Right cardiac atrium (tissue), 5 donors: ENCODE measurements at regions of chr5 and their contacts with region 1.

Region 1: DNA sequence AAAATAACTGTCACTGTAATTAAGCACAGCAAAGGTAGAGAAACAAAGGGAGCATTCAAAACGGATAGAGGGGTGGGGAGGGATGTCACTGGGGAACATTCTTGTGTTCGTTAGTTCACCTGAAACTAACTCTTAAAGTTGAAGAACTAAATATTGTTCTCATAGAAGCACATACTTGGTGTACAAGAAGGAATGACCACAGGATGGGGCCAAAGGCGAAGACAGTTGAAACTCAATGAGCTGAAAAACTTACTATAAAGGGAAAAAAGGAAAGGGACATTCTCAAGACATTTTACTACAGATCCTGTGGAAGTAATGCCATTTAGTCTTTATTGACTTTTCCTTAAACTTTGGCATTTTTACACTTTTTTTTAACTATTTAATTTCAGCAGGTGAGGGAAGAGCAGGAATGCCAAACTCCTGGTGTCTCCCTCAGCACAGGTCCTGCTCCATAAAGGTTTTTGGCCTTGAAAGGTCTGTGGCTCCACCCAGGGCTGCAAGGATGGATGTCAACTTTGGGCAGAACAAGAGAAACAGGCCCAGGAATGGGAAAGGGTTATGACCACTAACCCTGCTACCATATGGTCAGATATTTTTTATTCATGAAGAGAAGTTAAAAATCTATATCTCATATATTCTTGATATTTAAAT is 197.6 kb upstream of the RASA1 start:
- DNase-seq: no peak
- ATAC-seq: peak in 1 of 2 donors; percentile 31
- H3K4me3 ChIP-seq: no peak overlapping the region
- H3K27ac ChIP-seq: no peak overlapping the region
- H3K4me1 ChIP-seq: no peaks in the 10 kb centered on the region
- H3K27me3 ChIP-seq: no peaks in the 10 kb centered on the region

Region 2: DNA sequence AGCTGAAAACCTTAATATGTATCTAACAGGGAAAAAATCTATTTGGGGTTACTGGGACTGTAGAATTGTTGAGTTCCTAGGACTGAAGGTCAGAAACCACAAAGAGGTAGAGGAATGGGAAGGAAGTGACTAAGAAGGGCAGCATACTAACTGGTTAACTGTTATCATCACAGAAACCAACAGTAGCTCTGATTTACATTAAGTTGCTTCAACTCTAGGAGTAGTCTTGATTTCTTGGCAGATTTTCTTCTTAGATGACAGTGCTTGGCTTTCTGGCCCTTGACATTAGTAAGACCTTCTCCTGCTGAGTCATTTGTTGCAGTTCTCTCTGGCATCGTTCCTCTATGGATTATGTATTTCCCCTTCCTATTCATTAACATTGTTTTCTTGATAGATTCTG is 81.4 kb after region 1 on chr5:
- intact Hi-C with region 1: no loop called
- DNase-seq: no peak
- ATAC-seq: no peak
- H3K4me3 ChIP-seq: no peak overlapping the region
- H3K27ac ChIP-seq: no peak overlapping the region
- H3K4me1 ChIP-seq: no peaks in the 10 kb centered on the region
- H3K27me3 ChIP-seq: no peaks in the 10 kb centered on the region

Region 3: DNA sequence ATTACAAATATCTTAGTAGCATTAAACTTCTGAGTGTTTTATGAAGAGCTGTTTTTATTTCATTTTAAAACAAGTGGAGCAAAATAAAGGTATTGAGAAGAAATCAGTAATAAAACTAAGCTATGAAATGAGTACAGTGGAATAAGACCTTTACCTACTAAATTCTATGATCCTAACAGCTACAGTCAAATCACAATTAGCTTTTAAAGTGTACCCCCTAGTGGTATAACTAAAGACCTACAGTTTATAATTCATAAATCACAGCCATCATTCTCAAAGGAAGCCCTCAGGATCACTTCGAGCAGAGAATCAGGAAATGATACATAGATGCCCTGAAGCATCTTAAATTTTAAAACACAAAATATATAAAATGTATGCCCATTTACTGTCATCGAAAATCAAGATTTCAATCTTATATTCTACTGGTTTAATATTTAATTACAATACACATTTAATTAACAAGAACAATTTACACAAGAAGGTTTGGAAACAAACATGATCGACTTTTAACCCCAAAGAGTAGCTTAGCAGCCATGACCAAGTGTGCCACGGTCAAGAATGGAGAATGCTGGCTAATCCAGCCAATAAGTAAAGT is 330.3 kb after region 1 on chr5:
- intact Hi-C with region 1: loop called in 1 of 4 experiments (anchors 10 kb)
- DNase-seq: no peak
- ATAC-seq: peak in 1 of 2 donors; percentile 64
- H3K4me3 ChIP-seq: no peak overlapping the region
- H3K27ac ChIP-seq: no peak overlapping the region
- H3K4me1 ChIP-seq: no peaks in the 10 kb centered on the region
- H3K27me3 ChIP-seq: no peaks in the 10 kb centered on the region